B cell (primary cell): ENCODE measurements at regions of chr16 and their contacts with region 1.

Region 1: GRCh38 chr16:17194190-17194780 is 276.5 kb downstream of the XYLT1 start:
- DNase-seq: peak; percentile 67
- ATAC-seq: peak; percentile 51
- H3K4me3 ChIP-seq: no peak overlapping the region
- H3K4me3 Mint-ChIP-seq: no peak overlapping the region
- H3K27ac ChIP-seq: no peak overlapping the region
- H3K27ac Mint-ChIP-seq: peak overlapping the region; percentile 15
- H3K4me1 ChIP-seq: peaks cover 0 to 3% of the 10 kb centered on the region in 2 donors
- H3K4me1 Mint-ChIP-seq: no peaks in the 10 kb centered on the region
- H3K27me3 ChIP-seq: no peaks in the 10 kb centered on the region
- H3K27me3 Mint-ChIP-seq: no peaks in the 10 kb centered on the region
- CTCF ChIP-seq: peak; percentile 76

Region 2: DNA sequence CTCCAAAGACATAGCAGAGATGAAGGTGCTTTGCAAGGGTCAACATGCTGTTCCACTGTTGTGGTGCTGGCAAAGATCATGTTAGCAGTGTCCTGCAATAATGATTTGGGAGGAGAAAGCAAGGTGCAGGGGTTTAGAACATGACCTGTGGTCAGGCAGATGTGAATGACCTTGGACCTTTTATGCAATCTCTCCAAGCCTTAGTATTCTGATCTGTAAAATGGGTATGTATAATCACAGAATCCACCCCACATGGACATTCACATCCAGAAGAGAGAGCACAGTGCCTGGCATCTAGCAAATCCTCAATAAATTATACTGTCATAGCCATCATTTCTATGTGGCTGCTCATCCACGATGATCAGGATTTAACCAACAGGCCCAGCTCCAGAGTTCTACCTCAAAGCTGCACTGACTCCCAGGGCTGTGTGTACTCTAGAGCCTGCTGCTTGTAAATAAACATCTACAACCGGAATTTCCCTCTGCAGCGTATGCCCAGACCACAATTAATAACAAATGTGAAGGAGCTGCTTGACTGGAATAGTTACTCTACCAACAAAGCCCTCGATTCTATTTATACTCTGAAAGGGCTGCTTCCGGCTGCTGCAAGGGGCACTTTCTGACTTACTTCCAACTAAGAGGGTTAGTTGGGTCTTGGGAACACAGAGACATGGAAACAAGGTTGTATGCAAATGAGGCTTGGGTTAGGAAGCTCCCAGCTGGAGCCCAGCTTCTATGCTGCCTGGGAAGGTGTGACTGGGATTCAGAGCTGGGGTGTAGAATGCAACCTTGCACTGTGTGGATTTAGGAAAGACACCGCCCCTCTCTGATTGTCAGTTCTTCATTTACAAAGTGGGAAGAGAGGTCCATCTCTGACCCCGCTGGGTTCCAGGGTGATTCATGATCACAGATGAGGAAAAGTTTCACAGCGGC is 11.3 kb after region 1 on chr16:
- CTCF ChIA-PET with region 1: interaction called, 16 read pairs
- POLR2A ChIA-PET with region 1: no interaction called
- intact Hi-C with region 1: no loop called
- DNase-seq: no peak
- ATAC-seq: no peak
- H3K4me3 ChIP-seq: no peak overlapping the region
- H3K4me3 Mint-ChIP-seq: no peak overlapping the region
- H3K27ac ChIP-seq: no peak overlapping the region
- H3K27ac Mint-ChIP-seq: no peak overlapping the region
- H3K4me1 ChIP-seq: peaks cover 0 to 6% of the 10 kb centered on the region in 2 donors
- H3K4me1 Mint-ChIP-seq: peaks cover 2% of the 10 kb centered on the region
- H3K27me3 ChIP-seq: no peaks in the 10 kb centered on the region
- H3K27me3 Mint-ChIP-seq: no peaks in the 10 kb centered on the region
- CTCF ChIP-seq: no peak